Left ventricle myocardium superior (tissue), 1 donor: ENCODE measurements at regions of chr2 and their contacts with region 1.

Region 1: GRCh38 chr2:207133820-207134519 is 31.8 kb downstream of the KLF7 start:
- DNase-seq: peak; percentile 77
- ATAC-seq: peak; percentile 96

Region 2: DNA sequence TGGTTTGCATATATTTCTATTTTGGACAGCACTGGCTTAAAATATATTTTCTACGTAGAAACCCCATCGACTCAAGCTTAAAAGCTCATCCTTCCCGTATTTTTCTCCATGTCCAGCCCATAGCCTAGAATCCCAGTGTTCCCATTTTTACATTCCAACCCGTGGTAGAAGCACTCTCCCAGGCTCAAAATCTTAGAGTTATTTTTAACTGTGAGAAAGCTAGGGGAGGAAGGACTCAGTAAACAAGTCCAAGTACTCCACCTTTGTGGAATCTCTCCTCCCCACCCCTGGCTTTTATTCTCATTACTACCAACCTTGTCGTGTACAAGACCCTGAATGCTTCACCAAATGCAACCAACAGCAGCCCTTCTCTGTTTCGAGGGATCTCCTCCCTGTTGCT is 38.0 kb before region 1 on chr2:
- intact Hi-C with region 1: loop called (anchors 2 kb)
- DNase-seq: no peak
- ATAC-seq: peak; percentile 42

Region 3: DNA sequence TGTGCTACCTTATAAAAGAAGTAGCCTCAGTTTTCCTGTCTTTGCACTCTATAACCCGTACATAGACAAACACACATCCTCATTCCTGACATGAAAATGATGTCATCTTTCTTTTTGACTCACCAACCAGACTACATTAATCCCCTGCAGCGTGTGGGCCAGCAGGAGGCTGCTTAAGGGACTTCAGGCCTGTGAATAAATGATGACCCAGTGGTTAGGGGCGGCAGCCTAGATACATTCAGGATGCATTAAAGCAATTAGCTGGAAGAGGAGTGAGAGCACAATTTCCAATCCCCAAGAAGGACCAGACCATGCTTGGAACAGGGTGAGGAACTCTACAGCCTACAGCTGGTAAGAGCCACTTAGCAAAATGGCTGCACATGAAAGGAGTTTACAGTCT is 89.1 kb after region 1 on chr2:
- intact Hi-C with region 1: no loop called
- DNase-seq: no peak
- ATAC-seq: no peak

Region 4: GRCh38 chr2:207531034-207531954 is 397.3 kb after region 1 on chr2:
- intact Hi-C with region 1: no loop called
- DNase-seq: no peak
- ATAC-seq: no peak

Region 5: GRCh38 chr2:207819839-207820784 is 686.1 kb after region 1 on chr2:
- intact Hi-C with region 1: no loop called
- DNase-seq: no peak
- ATAC-seq: no peak

Region 6: GRCh38 chr2:208929139-208929864 is 1795.3 kb after region 1 on chr2:
- intact Hi-C with region 1: no loop called
- DNase-seq: no peak
- ATAC-seq: no peak